Caki2 (cell line): ENCODE measurements at regions of chr20 and their contacts with region 1.

Region 1: GRCh38 chr20:31559704-31560093 is 45.4 kb upstream of the ID1 start:
- DNase-seq: no peak

Region 2: GRCh38 chr20:31454365-31454764 is 105.3 kb before region 1 on chr20:
- in situ Hi-C with region 1: no loop called
- DNase-seq: no peak

Region 3: GRCh38 chr20:31494131-31494530 is 65.6 kb before region 1 on chr20:
- in situ Hi-C with region 1: no loop called
- DNase-seq: no peak

Region 4: GRCh38 chr20:31595654-31596411 is 36.1 kb after region 1 on chr20:
- in situ Hi-C with region 1: no loop called
- DNase-seq: peak; percentile 98

Region 5: GRCh38 chr20:31723319-31724078 is 163.8 kb after region 1 on chr20:
- in situ Hi-C with region 1: loop called (anchors 10 kb)
- DNase-seq: peak; percentile 100